Naive thymus-derived CD4-positive, alpha-beta T cell (primary cell): ENCODE measurements at regions of chr16 and their contacts with region 1.

Region 1: GRCh38 chr16:88700636-88701482 is 5.3 kb downstream of the RNF166 start:
- DNase-seq: peak; percentile 86 to 96 (median 93)
- ATAC-seq: peak; percentile 91
- H3K4me3 ChIP-seq: peak overlapping the region; percentile 56
- H3K4me3 Mint-ChIP-seq: peak overlapping the region; percentile 78 to 98 (median 94)
- H3K27ac ChIP-seq: peak overlapping the region; percentile 88
- H3K27ac Mint-ChIP-seq: peak overlapping the region; percentile 85 to 98 (median 97)
- H3K4me1 ChIP-seq: peaks cover 32 to 60% of the 10 kb centered on the region in 2 donors
- H3K4me1 Mint-ChIP-seq: peaks cover 36 to 69% (median 47%) of the 10 kb centered on the region in 7 donors
- H3K27me3 ChIP-seq: no peaks in the 10 kb centered on the region
- H3K27me3 Mint-ChIP-seq: no peaks in the 10 kb centered on the region

Region 2: DNA sequence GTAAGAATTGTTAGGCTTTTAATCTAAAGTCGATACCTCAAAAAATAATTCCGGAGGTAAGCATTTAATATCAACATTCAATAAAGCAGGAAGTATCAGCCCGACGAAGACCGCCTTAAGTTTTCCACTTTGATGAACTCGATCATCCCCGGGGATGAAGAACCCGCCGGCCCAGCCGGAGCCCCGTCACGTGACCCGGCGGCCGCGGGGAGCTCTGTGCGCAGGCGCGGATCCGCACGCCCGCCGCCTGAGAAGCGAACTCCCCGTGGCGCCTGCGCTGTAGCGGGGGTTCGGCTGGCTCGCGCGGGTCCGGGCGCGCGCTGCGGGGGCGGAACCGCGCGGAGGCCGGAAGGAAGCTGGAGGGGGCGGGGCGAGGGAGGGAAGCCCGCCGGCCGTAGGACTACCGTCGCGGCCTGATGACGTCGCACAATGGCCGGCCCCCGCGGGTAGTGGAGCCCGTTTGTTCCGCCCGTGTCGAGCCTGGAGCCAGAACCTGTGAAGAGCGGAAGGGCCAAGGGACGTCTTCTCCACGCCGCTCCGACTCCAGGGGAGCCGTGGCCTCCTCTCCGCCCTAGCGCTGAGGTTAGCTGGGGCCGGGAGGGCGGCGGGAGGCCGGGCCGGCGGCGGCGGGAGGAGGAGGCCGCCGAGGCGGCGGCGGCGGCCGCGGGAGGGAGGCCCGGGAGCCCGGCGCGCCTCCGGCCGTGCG is 130.7 kb before region 1 on chr16 and contains the start of gene ZC3H18:
- CTCF ChIA-PET with region 1: no interaction called
- POLR2A ChIA-PET with region 1: interaction called, 6 read pairs
- intact Hi-C with region 1: loop called (anchors 1 kb)
- DNase-seq: peak; percentile 93 to 99 (median 96)
- ATAC-seq: peak; percentile 99
- H3K4me3 ChIP-seq: peak within 1 kb of the TSS; percentile 84
- H3K4me3 Mint-ChIP-seq: peak within 1 kb of the TSS; percentile 81 to 93 (median 87)
- H3K27ac ChIP-seq: peak within 1 kb of the TSS; percentile 91
- H3K27ac Mint-ChIP-seq: peak within 1 kb of the TSS; percentile 45 to 93 (median 89)
- H3K4me1 ChIP-seq: peaks cover 21% of the 10 kb centered on the region in 2 donors
- H3K4me1 Mint-ChIP-seq: peaks cover 10 to 39% (median 34%) of the 10 kb centered on the region in 7 donors
- H3K27me3 ChIP-seq: no peaks in the 10 kb centered on the region
- H3K27me3 Mint-ChIP-seq: no peaks in the 10 kb centered on the region
- total RNA-seq, gene ZC3H18: 74.0 to 97.8 (median 82.6) TPM

Region 3: DNA sequence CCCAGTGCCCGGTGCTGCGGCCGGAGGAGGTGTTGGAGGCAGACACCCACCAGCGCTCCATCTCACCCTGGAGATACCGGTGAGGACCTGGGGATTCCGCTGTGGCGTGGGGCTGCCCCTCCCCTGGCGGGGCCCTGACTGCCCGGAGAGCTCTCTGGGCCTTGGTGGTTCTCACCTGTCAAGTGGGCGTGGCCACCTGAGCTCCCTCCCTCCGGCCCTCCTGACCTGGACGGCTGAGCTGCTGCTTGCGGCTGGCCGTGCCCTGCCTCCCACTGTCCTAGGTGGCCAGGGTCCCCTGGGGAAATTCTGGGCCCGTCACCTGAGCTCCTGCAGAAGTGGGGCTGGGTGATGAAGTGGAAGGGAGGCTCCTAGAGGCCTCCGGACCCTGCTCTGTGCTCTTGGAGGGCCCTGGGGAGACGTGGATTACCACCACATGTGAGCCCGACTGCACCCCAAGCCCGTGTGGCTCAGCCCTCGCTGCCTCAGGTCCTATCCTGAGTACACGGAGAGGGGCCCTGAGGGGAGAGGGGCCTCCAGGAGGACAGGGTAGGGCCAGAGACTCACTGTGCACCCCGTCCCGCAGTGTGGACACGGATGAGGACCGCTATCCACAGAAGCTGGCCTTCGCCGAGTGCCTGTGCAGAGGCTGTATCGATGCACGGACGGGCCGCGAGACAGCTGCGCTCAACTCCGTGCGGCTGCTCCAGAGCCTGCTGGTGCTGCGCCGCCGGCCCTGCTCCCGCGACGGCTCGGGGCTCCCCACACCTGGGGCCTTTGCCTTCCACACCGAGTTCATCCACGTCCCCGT is 61.4 kb before region 1 on chr16:
- CTCF ChIA-PET with region 1: no interaction called
- POLR2A ChIA-PET with region 1: interaction called, 4 read pairs
- intact Hi-C with region 1: loop called (anchors 2 to 5 kb)
- DNase-seq: no peak
- ATAC-seq: no peak
- H3K4me3 ChIP-seq: no peak overlapping the region
- H3K4me3 Mint-ChIP-seq: peak overlapping the region in 3 of 10 donors; percentile 43 to 63 (median 56)
- H3K27ac ChIP-seq: no peak overlapping the region
- H3K27ac Mint-ChIP-seq: no peak overlapping the region
- H3K4me1 ChIP-seq: peaks cover 21 to 27% of the 10 kb centered on the region in 2 donors
- H3K4me1 Mint-ChIP-seq: peaks cover 27 to 50% (median 33%) of the 10 kb centered on the region in 7 donors
- H3K27me3 ChIP-seq: peaks cover 0 to 6% of the 10 kb centered on the region in 2 donors
- H3K27me3 Mint-ChIP-seq: peaks cover 0 to 42% (median 13%) of the 10 kb centered on the region in 5 donors

Region 4: GRCh38 chr16:88662843-88663606 is 37.8 kb before region 1 on chr16 and contains the start of gene MVD:
- CTCF ChIA-PET with region 1: no interaction called
- POLR2A ChIA-PET with region 1: interaction called, 33 read pairs
- intact Hi-C with region 1: loop called (anchors 1 kb)
- DNase-seq: peak; percentile 88 to 96 (median 94)
- ATAC-seq: peak; percentile 99
- H3K4me3 ChIP-seq: peak within 1 kb of the TSS; percentile 89
- H3K4me3 Mint-ChIP-seq: peak within 1 kb of the TSS; percentile 91 to 96 (median 94)
- H3K27ac ChIP-seq: peak within 1 kb of the TSS; percentile 95
- H3K27ac Mint-ChIP-seq: peak within 1 kb of the TSS; percentile 56 to 95 (median 93)
- H3K4me1 ChIP-seq: peaks cover 8% of the 10 kb centered on the region in 2 donors
- H3K4me1 Mint-ChIP-seq: peaks cover 12 to 26% (median 19%) of the 10 kb centered on the region in 7 donors
- H3K27me3 ChIP-seq: no peaks in the 10 kb centered on the region
- H3K27me3 Mint-ChIP-seq: no peaks in the 10 kb centered on the region
- total RNA-seq, gene MVD: 37.7 to 66.9 (median 42.7) TPM

Region 5: DNA sequence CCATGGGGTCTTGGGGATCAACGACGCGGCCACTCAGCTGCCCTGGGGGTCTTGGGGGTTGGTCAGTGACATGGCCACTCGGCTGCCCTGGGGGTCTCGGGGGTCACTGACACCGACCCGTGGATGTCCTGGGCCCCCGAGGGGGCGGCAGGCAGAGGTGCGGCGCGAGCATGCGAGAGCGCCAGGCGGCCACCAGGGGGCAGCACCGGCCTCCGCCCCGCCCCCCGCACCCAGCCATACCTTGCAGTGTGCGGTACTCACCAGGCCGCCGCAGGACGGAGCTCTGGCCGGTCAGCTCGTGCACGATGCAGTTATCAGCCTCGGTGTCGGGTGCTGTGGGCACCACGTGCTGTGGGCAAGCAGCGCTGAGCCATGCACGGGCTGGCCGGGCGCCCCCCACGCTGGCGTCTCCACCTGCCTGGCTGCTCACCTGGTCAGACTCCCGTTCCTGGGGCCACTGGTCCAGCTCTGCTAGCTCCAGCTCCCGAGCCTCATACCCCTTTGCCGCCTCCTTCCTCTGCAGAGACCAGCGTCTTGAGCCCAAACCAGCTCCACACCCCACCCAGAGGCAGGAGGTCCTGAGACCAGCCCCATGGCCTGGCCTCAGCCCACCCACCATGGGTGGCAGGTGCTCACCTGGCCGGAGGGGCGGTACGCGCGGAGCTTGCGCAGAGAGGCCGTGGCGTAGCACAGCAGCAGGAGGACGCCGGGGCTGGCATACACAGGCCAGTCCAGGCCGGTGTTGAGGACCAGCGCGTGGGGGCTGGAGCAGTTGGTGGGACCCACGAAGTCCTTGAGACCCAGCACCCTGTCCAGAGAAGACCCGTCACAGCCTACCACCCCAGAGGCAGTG is 36.7 kb after region 1 on chr16:
- CTCF ChIA-PET with region 1: interaction called, 10 read pairs
- POLR2A ChIA-PET with region 1: no interaction called
- intact Hi-C with region 1: loop called in 1 of 2 experiments (anchors 5 kb)
- DNase-seq: peak; percentile 55 to 81 (median 65)
- ATAC-seq: peak; percentile 95
- H3K4me3 ChIP-seq: no peak overlapping the region
- H3K4me3 Mint-ChIP-seq: peak overlapping the region in 1 of 10 donors; percentile 34
- H3K27ac ChIP-seq: no peak overlapping the region
- H3K27ac Mint-ChIP-seq: no peak overlapping the region
- H3K4me1 ChIP-seq: peaks cover 3 to 5% of the 10 kb centered on the region in 2 donors
- H3K4me1 Mint-ChIP-seq: peaks cover 0 to 8% (median 0%) of the 10 kb centered on the region in 7 donors
- H3K27me3 ChIP-seq: no peaks in the 10 kb centered on the region
- H3K27me3 Mint-ChIP-seq: no peaks in the 10 kb centered on the region

Region 6: DNA sequence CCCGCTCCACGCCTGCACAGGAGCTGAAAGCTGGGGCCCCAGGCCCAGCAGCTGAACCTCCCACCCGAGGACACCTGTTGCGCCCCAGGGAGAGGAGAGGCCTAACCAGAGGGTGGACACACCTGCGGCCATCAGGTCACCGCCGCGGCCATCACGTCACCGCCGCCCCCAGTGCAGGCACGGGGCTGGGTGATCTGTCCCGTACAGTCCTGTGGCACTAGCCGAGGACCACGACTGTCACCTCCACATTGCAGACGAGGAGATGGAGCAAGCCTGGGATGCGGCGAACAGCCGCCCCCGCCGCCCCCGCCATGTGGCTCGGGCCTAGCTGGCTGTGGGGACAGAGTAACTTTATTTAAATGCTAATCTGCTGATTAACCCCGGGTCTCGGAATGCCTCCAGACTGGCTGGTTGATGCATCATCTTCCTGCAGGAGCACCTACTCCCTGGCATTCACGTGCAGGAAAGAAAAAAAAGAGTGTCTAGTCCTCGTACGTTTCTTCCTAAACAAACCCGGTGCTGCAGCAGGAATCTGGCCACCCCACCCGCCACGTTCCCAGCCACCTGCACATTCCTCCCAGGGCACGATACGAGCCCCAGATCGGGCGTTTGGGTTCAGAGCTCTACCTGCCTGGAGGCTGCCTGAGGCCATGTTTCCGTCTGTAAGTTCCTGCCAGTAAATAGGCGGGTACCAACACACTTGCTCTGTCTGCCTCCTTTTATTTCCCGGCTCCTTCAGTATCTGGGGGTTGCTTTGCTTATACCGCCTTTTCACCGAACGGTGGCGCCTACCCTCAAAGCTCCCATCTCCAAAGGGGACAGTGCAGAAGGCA is 54.3 kb after region 1 on chr16:
- CTCF ChIA-PET with region 1: no interaction called
- POLR2A ChIA-PET with region 1: no interaction called
- intact Hi-C with region 1: no loop called
- DNase-seq: peak in 2 of 9 donors; percentile 22 to 29
- ATAC-seq: no peak
- H3K4me3 ChIP-seq: no peak overlapping the region
- H3K4me3 Mint-ChIP-seq: no peak overlapping the region
- H3K27ac ChIP-seq: no peak overlapping the region
- H3K27ac Mint-ChIP-seq: peak overlapping the region in 4 of 9 donors; percentile 57 to 77 (median 69)
- H3K4me1 ChIP-seq: peaks cover 3 to 14% of the 10 kb centered on the region in 2 donors
- H3K4me1 Mint-ChIP-seq: peaks cover 4 to 26% (median 11%) of the 10 kb centered on the region in 7 donors
- H3K27me3 ChIP-seq: no peaks in the 10 kb centered on the region
- H3K27me3 Mint-ChIP-seq: no peaks in the 10 kb centered on the region